Activated CD4-positive, alpha-beta memory T cell treated with anti-CD3 and anti-CD28 coated beads for 36 hours (primary cell): ENCODE measurements at regions of chr1 and their contacts with region 1.

Region 1: GRCh38 chr1:64242895-64243756 is 39.7 kb downstream of the UBE2U start:
- DNase-seq: no peak
- H3K4me3 Mint-ChIP-seq: no peak overlapping the region
- H3K27ac Mint-ChIP-seq: no peak overlapping the region
- H3K4me1 Mint-ChIP-seq: peaks cover 18% of the 10 kb centered on the region
- H3K27me3 Mint-ChIP-seq: peaks cover 13% of the 10 kb centered on the region

Region 2: DNA sequence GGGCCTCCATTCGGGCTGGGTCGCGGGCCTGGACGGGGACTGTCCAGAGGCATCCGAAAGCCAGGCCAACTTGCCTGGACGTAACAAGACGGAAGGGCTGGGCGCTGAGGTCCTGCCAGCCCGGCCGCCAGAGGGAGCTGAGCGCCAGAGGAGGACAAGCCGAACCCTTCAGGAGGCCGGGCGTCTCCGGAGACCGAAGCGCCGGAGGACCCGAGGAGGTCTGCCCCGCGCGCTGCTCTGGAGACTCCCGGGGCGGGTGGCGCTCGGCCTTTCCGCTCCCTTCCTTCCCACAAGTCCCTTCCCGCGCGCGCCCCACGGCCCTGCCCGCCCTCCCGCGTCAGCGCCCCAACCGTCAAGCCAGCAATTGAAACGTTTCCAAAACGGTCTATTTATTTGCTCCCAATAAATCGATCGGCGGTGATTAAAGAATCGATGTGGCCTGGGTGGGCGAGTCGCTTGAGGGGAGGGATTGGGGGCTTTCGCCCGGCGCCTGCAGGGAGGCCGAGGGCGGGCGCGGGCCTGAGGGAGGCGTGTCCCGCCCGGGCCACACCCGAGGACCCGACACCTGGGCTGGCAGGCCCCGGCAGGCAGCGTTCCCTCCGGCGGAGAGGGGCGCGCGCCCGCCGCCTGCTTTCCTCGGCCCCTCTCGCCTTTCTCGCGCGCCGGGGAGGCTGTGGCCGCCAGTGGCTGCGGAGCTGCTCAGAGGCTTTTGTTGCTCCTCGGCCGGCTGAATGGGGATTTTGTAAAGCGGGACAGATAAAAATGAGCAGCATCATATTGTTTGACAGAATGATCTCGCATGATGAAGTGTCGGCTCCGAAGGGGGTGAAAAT is 925.9 kb before region 1 on chr1:
- CTCF ChIA-PET with region 1: no interaction called
- POLR2A ChIA-PET with region 1: no interaction called
- intact Hi-C with region 1: loop called (anchors 10 kb)
- DNase-seq: peak; percentile 72
- H3K4me3 Mint-ChIP-seq: peak overlapping the region; percentile 53
- H3K27ac Mint-ChIP-seq: no peak overlapping the region
- H3K4me1 Mint-ChIP-seq: peaks cover 29% of the 10 kb centered on the region
- H3K27me3 Mint-ChIP-seq: peaks cover 67% of the 10 kb centered on the region

Region 3: DNA sequence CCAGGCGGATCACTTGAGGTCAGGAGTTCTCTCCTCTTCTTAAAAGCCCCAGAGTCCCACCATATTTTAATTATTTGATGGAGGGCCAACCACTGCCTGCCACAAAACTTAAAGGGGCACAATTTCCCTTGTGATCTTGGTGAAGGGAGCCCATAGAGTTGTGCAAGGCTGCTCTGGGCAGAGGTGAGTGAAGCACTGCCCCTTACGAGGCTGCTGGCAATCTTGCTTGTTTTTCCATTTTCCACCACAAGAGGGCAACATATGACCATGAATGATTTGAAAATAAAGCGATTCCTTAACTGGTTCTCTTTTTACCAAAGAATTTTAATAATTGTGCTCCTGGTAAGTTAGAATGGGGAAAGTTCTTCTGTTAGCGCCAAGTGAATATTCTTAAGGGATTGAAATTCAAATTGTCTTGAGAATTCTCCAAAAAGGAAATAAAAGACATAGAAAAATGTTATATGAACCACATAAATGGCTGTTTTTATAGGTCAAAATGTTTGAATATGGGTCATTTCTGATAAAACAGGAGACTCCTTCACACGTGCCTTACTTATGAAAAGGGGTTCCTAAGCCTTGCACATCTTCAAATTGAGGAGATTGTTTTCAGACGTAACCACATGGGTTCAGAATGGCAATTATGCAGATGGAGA is 627.2 kb before region 1 on chr1:
- CTCF ChIA-PET with region 1: interaction called, 14 read pairs
- POLR2A ChIA-PET with region 1: no interaction called
- intact Hi-C with region 1: loop called (anchors 1 kb)
- DNase-seq: peak; percentile 48
- H3K4me3 Mint-ChIP-seq: no peak overlapping the region
- H3K27ac Mint-ChIP-seq: no peak overlapping the region
- H3K4me1 Mint-ChIP-seq: peaks cover 3% of the 10 kb centered on the region
- H3K27me3 Mint-ChIP-seq: no peaks in the 10 kb centered on the region

Region 4: DNA sequence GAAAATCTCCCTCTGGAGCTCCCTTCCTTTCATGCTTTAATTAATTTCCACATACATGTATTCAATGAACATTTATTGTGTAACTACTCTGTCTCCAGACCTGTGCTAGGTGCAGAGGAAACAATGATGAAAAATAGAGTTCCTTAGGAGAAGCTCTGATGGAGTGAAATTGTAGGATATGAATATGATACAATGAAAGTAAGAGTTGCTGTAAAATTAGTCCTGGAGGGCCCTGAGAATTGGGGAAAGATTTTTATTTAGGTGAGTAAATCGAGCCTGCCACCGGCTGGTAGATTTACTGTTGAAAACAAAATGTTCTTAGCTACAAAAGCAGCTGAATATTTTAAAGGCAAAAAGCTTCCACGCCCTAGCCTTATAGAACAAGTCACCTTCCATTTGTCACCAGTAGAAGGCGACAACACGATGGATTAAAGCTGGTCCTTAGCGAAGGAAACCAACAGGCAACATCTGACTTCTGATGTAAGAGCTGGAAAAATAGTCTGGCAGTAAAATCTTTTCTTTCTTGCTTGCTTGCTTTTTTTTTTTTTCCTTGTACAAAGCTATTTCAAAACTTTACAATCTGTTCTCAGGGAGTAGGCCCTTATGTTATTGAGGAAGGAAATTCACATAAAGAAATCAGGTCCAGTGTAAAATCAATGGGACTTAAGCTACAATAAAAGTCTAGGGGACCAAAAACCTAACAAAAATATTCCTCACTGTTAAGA is 551.3 kb before region 1 on chr1:
- CTCF ChIA-PET with region 1: interaction called, 28 read pairs
- POLR2A ChIA-PET with region 1: no interaction called
- intact Hi-C with region 1: loop called (anchors 1 kb)
- DNase-seq: peak; percentile 35
- H3K4me3 Mint-ChIP-seq: no peak overlapping the region
- H3K27ac Mint-ChIP-seq: no peak overlapping the region
- H3K4me1 Mint-ChIP-seq: no peaks in the 10 kb centered on the region
- H3K27me3 Mint-ChIP-seq: no peaks in the 10 kb centered on the region

Region 5: GRCh38 chr1:63773815-63774616 is 469.1 kb before region 1 on chr1 and contains the start of gene ROR1:
- CTCF ChIA-PET with region 1: interaction called, 3 read pairs
- POLR2A ChIA-PET with region 1: no interaction called
- intact Hi-C with region 1: loop called (anchors 10 kb)
- DNase-seq: peak; percentile 79
- H3K4me3 Mint-ChIP-seq: peak within 1 kb of the TSS; percentile 66
- H3K27ac Mint-ChIP-seq: no peak within 1 kb of the TSS
- H3K4me1 Mint-ChIP-seq: peaks cover 14% of the 10 kb centered on the region
- H3K27me3 Mint-ChIP-seq: peaks cover 50% of the 10 kb centered on the region
- total RNA-seq, gene ROR1: 0.10 to 0.12 TPM

Region 6: GRCh38 chr1:63935143-63935542 is 308.0 kb before region 1 on chr1:
- CTCF ChIA-PET with region 1: no interaction called
- POLR2A ChIA-PET with region 1: no interaction called
- intact Hi-C with region 1: loop called (anchors 5 kb)
- DNase-seq: no peak
- H3K4me3 Mint-ChIP-seq: no peak overlapping the region
- H3K27ac Mint-ChIP-seq: no peak overlapping the region
- H3K4me1 Mint-ChIP-seq: no peaks in the 10 kb centered on the region
- H3K27me3 Mint-ChIP-seq: no peaks in the 10 kb centered on the region